ENCODE measurements at regions of chr12 and their contacts with region 1.

Region 1: GRCh38 chr12:27185234-27186021 is 58.7 kb upstream of the STK38L start:
- DNase-seq: peak; percentile 86
- H3K4me3 Mint-ChIP-seq: peak overlapping the region; percentile 50
- H3K27ac Mint-ChIP-seq: peak overlapping the region; percentile 62
- H3K4me1 Mint-ChIP-seq: peaks cover 22% of the 10 kb centered on the region
- H3K27me3 Mint-ChIP-seq: no peaks in the 10 kb centered on the region

Region 2: DNA sequence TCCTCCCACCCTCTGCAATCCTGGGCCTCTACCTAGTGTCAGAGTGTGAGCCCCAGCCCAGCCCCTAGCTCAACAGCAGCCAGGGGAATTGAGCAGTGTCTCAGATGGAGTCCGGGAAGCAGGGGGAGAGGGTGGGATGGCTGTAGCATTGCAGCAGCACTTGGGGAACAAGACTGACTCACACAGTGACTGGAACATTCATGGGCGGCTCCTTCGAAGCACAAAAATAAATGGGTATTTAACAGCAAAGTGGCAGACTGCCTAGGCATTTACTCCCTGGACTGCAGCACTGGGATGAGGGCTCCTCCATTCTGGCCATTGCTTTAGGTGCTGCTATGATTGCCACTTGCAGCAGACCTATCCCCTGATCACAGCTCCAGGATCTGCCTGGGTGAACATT is 12.6 kb after region 1 on chr12:
- intact Hi-C with region 1: loop called (anchors 2 kb)
- DNase-seq: peak; percentile 42
- H3K4me3 Mint-ChIP-seq: no peak overlapping the region
- H3K27ac Mint-ChIP-seq: no peak overlapping the region
- H3K4me1 Mint-ChIP-seq: peaks cover 14% of the 10 kb centered on the region
- H3K27me3 Mint-ChIP-seq: no peaks in the 10 kb centered on the region

Measured in activated CD4-positive, alpha-beta T cell treated with anti-CD3 and anti-CD28 coated beads, Interleukin-2, amount 10 ng/mL, durations not matched to agents 24 days and 14 days (primary cell).